GM18951 (cell line): ENCODE measurements at regions of chr1 and their contacts with region 1.

Region 1: DNA sequence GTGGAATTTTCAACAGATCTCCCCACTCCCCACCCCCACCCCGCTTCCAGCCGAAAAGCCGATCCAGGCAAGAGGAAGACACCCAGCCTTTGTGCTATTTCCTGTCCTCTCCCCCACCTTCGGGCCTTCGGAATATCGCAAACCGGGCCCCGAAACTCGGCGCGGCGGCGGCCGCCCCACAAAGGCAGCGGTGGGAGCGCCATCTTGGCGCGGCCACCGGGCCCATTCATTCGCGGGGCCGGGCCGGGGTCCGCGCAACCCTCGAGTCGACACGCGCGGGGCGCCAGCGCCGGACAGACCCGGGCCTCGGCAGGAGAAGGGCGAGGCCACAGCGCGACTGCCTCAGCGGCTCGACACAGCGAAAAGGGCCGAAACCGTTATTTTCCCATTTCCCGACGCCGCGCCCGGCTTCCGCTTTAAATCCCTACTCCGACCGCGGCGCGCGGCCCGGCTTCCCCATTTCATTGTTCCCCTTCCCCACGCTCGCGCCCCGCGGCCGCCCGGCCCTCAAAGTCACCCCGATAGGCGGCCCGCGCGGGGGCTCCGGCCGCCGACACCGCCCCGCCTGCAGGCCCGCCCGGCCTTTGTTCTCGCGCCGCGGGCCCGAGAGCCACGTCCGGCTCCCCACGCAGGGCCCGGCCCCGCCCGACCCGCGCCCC is 911 bp downstream of the GNB1 start:
- POLR2A ChIP-seq: peak; percentile 35

Region 2: DNA sequence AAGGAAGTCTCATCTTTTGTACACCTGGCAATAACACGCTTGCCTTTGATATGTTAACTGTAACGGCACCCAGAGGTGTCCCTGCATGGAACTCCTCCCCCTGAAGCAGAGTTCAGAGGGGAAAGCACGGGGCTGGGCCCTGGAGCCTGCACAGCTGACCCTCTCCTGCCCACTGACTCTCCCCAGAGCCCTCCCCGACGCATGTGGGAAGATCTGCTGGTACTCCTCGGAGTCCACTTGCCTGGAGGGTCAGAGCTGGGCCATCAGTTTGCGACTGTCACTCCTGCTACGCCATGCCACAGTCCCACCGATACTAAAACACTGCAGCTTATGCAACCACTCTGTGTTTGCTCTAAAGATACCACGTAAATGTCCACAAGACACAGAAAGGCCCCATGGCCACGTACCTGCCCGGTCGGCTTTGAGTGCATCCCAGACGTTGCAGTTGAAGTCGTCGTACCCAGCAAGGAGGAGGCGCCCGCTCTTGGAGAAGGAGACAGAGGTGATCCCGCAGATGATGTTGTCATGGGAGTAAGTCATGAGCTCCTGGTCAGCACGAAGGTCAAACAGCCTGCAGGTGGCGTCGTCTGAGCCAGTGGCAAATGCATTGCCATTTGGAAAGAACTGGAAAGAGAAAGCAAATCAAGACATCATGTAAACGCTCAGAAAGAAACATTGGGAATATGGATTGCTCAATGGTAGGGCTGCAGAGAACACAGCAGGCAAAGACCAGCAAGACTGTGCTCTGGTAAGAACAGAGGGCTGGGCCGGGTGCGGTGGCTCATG is 101.1 kb before region 1 on chr1:
- in situ Hi-C with region 1: loop called (anchors 5 kb)
- POLR2A ChIP-seq: no peak

Region 3: GRCh38 chr1:1989102-1989542 is 99.1 kb after region 1 on chr1:
- in situ Hi-C with region 1: no loop called
- POLR2A ChIP-seq: no peak

Region 4: GRCh38 chr1:2480986-2481364 is 591.0 kb after region 1 on chr1:
- in situ Hi-C with region 1: no loop called
- POLR2A ChIP-seq: no peak